ENCODE measurements at regions of chr19 and their contacts with region 1.

Region 1: DNA sequence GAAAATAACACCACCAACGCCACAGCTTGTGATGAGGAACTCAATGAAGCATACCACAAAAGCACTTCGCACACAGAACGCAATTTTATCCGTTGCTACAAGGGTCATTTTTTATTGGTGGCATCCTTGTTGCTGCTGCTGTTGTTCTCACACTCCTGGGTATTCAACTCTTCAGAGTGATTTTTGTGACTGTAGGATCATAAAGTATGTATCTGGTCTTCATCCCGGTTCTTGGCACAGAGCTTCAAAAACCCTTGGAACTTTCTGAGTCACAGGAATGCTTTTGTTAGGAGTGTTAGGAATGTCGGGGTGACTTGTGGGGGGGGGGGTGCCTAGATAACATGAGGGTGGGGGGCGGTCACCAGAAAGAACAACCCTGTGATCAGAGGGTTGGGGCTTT is 108.4 kb downstream of the ZNF557 start:
- DNase-seq: peak; percentile 66
- H3K4me3 ChIP-seq: no peak overlapping the region
- H3K27ac ChIP-seq: peak overlapping the region; percentile 51 to 88 (median 74)
- H3K4me1 ChIP-seq: peaks cover 0 to 66% (median 55%) of the 10 kb centered on the region in 4 donors
- H3K27me3 ChIP-seq: no peaks in the 10 kb centered on the region
- CTCF ChIP-seq: no peak
- EP300 ChIP-seq: peak in 3 of 4 donors; percentile 23 to 58 (median 41)
- POLR2A ChIP-seq: no peak

Region 2: DNA sequence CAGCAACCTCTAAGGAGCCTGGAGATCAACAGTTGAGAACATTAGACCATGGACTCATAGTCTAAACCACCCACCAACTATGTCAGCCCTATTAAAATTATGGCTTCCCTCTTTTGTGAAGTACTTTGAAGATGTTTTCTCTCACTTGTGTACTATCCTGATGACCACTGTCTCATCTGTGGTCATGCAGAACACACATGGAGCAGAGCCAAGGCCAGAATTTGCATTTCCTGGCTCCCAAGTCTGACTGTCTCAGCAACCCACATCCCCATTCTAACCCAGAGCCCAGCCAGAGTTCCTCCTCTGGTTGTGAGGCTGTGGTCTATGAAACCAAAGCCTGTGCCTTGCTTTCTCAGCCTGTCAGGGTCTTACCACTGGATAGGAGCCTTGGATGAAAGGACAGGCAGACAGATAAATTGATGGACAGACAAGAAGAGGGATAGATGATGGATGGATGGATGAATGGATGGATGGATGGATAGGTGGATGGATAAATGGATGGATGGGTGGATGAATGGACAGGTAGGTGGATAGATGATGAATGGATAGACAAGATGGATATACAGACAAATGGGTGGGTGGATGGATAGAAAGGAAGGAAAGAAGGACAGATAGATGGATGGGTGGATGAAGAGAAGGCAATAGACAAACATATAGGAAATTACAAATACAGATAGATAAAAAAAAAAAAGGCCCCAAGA is 73.0 kb before region 1 on chr19:
- intact Hi-C with region 1: no loop called
- DNase-seq: no peak
- H3K4me3 ChIP-seq: no peak overlapping the region
- H3K27ac ChIP-seq: no peak overlapping the region
- H3K4me1 ChIP-seq: peaks cover 0 to 9% (median 8%) of the 10 kb centered on the region in 4 donors
- H3K27me3 ChIP-seq: no peaks in the 10 kb centered on the region
- CTCF ChIP-seq: no peak
- EP300 ChIP-seq: no peak
- POLR2A ChIP-seq: no peak

Region 3: DNA sequence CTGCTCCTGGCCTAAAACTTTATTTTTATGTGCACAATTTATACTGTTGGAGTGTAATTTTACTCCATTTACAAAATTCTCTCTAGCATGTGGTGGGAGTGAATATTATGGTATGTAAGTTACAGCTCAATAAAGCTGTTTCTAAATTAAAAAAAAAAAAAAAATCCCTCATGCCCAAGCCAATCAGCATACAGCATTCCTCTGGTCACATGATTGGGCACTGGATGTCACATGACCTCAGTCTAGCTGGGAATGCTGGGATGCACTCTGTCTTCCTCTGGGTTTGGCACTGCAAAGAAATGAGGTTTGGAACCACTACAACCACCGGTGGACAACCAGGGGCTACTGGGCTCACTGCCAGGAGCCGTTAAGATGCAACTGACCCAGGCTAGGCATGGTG is 40.8 kb before region 1 on chr19:
- intact Hi-C with region 1: no loop called
- DNase-seq: peak; percentile 51
- H3K4me3 ChIP-seq: no peak overlapping the region
- H3K27ac ChIP-seq: no peak overlapping the region
- H3K4me1 ChIP-seq: peaks cover 0 to 8% (median 0%) of the 10 kb centered on the region in 4 donors
- H3K27me3 ChIP-seq: no peaks in the 10 kb centered on the region
- CTCF ChIP-seq: no peak
- EP300 ChIP-seq: no peak
- POLR2A ChIP-seq: no peak

Region 4: GRCh38 chr19:7159105-7159933 is 18.6 kb before region 1 on chr19:
- intact Hi-C with region 1: loop called (anchors 2 kb)
- DNase-seq: peak; percentile 96
- H3K4me3 ChIP-seq: no peak overlapping the region
- H3K27ac ChIP-seq: peak overlapping the region; percentile 76 to 89 (median 82)
- H3K4me1 ChIP-seq: peaks cover 0 to 28% (median 16%) of the 10 kb centered on the region in 4 donors
- H3K27me3 ChIP-seq: no peaks in the 10 kb centered on the region
- CTCF ChIP-seq: no peak
- EP300 ChIP-seq: peak in 3 of 4 donors; percentile 3 to 94 (median 56)
- POLR2A ChIP-seq: no peak

Region 5: GRCh38 chr19:7368456-7368855 is 190.5 kb after region 1 on chr19:
- intact Hi-C with region 1: loop called (anchors 2 kb)
- DNase-seq: peak; percentile 99
- H3K4me3 ChIP-seq: peak overlapping the region in 1 of 4 donors; percentile 10
- H3K27ac ChIP-seq: peak overlapping the region; percentile 76 to 94 (median 92)
- H3K4me1 ChIP-seq: peaks cover 0 to 83% (median 67%) of the 10 kb centered on the region in 4 donors
- H3K27me3 ChIP-seq: no peaks in the 10 kb centered on the region
- CTCF ChIP-seq: no peak
- EP300 ChIP-seq: peak; percentile 95 to 99 (median 98)
- POLR2A ChIP-seq: no peak

Measured in sigmoid colon (tissue), 7 donors.